ENCODE measurements at regions of chr19 and their contacts with region 1.

Region 1: DNA sequence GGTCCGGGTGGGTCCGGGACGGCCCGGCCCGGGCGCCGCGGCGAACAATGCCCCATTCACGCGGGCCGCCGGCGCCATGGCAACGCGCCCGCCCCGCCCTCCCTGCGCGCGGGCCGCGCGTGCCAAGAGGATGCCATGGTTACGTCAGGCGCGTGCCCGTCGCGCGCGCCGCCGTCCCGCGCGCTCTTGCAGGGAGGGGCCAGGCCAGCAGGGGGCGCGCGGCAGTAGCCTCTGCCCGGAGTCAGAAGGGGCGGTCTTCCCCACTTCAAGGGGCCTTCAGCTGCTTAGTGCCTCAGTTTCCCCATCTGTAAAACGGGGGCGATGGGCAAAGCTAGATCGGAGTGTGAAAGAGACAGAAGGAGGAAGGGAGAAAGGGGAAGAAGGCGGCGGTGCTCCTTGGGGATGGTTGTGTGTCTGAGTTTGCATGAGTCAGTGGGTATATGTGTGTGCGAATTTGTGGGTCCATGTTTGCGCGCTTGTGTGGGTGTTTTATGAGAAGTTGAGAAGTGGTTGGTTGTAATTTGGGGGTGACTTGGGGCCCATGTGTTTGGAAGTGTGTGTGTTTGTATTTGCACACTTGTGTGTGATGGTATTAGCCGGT is 11.6 kb upstream of the NFIX start:
- DNase-seq: peak; percentile 91 to 92
- ATAC-seq: peak; percentile 40 to 73 (median 43)
- H3K4me3 ChIP-seq: peak overlapping the region; percentile 19
- H3K4me3 Mint-ChIP-seq: no peak overlapping the region
- H3K27ac ChIP-seq: no peak overlapping the region
- H3K27ac Mint-ChIP-seq: no peak overlapping the region
- H3K4me1 ChIP-seq: peaks cover 33% of the 10 kb centered on the region
- H3K4me1 Mint-ChIP-seq: peaks cover 0 to 5% of the 10 kb centered on the region in 2 donors
- H3K27me3 ChIP-seq: peaks cover 7% of the 10 kb centered on the region
- H3K27me3 Mint-ChIP-seq: peaks cover 0 to 3% of the 10 kb centered on the region in 2 donors
- CTCF ChIP-seq: peak; percentile 84

Region 2: DNA sequence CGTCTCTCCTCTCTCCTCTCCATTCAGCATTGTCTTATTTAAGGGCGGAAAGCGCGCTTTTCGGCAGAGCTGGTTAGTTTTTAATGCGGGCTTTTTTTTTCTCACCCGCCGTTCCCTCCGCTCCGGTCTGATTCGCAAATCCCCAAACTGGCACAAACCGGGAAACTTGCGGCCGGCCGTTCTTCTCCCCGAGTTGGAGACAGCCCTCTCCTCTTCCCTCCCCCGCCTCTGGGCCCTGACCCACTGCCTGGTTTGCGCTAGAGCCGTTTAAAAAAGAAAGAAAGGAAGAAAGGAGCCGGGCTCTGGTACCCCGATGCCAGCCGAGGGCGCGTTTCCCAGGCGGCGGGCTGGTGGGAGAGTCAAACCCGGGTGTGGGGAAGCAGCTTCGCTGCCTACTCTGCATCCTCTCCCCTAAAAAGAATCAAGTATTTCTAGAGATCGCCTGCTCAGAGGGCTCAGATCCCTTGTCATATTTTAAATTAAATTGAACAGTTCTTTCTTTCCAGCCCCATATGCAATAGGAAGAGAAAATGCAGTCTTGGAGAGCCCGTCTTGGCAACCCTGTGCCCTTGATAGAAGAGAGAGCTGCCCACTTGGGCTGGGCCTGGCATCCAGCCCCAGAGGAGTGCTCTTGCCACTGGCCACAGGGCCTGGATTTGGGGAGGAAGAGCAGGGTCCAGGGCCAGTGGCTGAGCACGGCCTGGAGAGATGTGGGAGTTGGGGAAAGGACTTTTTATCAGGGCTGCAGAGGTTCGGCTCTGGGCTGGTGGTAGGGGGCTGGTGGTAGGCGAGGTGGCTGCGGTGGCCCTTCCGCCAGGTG is 30.7 kb after region 1 on chr19:
- intact Hi-C with region 1: loop called (anchors 2 kb)
- DNase-seq: peak in 1 of 2 donors; percentile 32
- ATAC-seq: no peak
- H3K4me3 ChIP-seq: peak overlapping the region; percentile 4
- H3K4me3 Mint-ChIP-seq: peak overlapping the region; percentile 93
- H3K27ac ChIP-seq: no peak overlapping the region
- H3K27ac Mint-ChIP-seq: peak overlapping the region; percentile 68 to 89
- H3K4me1 ChIP-seq: peaks cover 32% of the 10 kb centered on the region
- H3K4me1 Mint-ChIP-seq: peaks cover 18 to 25% of the 10 kb centered on the region in 2 donors
- H3K27me3 ChIP-seq: peaks cover 62% of the 10 kb centered on the region
- H3K27me3 Mint-ChIP-seq: peaks cover 48 to 73% of the 10 kb centered on the region in 2 donors
- CTCF ChIP-seq: no peak

Region 3: GRCh38 chr19:13044231-13044836 is 60.7 kb after region 1 on chr19:
- intact Hi-C with region 1: loop called (anchors 1 kb)
- DNase-seq: peak; percentile 79 to 83
- ATAC-seq: peak; percentile 83 to 93 (median 92)
- H3K4me3 ChIP-seq: no peak overlapping the region
- H3K4me3 Mint-ChIP-seq: peak overlapping the region; percentile 82
- H3K27ac ChIP-seq: peak overlapping the region; percentile 88
- H3K27ac Mint-ChIP-seq: peak overlapping the region; percentile 76 to 95
- H3K4me1 ChIP-seq: peaks cover 44% of the 10 kb centered on the region
- H3K4me1 Mint-ChIP-seq: peaks cover 33 to 42% of the 10 kb centered on the region in 2 donors
- H3K27me3 ChIP-seq: no peaks in the 10 kb centered on the region
- H3K27me3 Mint-ChIP-seq: peaks cover 0 to 11% of the 10 kb centered on the region in 2 donors
- CTCF ChIP-seq: no peak

Region 4: GRCh38 chr19:13060964-13061927 is 77.6 kb after region 1 on chr19:
- intact Hi-C with region 1: loop called (anchors 1 kb)
- DNase-seq: peak; percentile 79 to 89
- ATAC-seq: peak; percentile 85 to 99 (median 98)
- H3K4me3 ChIP-seq: peak overlapping the region; percentile 27
- H3K4me3 Mint-ChIP-seq: peak overlapping the region; percentile 85
- H3K27ac ChIP-seq: no peak overlapping the region
- H3K27ac Mint-ChIP-seq: peak overlapping the region in 1 of 2 donors; percentile 81
- H3K4me1 ChIP-seq: peaks cover 19% of the 10 kb centered on the region
- H3K4me1 Mint-ChIP-seq: peaks cover 6 to 11% of the 10 kb centered on the region in 2 donors
- H3K27me3 ChIP-seq: peaks cover 7% of the 10 kb centered on the region
- H3K27me3 Mint-ChIP-seq: peaks cover 14 to 25% of the 10 kb centered on the region in 2 donors
- CTCF ChIP-seq: peak; percentile 99

Region 5: DNA sequence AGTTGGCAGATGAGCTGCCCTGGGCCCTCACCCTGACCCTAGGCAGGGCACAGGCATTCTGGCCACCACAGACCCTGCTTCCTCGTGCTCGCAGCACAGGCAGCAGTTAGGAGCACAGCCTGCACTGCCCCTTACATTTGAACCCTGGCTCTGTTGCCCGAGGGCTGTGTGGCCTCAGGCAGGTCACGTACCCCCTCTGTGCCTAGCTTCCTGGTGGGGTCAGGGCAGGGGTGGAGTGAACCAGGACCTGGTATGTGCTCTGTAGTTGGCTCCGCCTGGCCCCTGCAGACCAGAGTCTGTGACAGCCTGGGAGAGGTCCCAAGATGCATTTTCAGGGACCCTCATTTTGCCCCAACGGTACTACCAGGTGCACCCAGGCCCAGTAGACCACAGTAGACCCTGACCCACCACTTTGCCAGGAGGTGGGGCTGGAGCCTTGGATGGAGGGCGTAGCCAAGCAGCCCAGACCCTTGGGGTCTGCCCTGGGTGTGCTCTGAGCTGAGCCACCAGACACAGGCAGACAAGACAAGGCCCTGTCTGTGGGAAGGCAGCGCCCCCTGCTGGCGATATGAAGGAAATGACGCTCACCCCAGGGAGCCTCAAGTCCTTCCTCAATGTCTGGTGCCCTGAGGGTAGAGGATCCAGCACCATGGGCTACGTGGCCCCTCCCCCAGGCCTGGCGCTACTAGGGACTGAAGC is 109.9 kb after region 1 on chr19:
- intact Hi-C with region 1: loop called (anchors 1 kb)
- DNase-seq: peak; percentile 80 to 90
- ATAC-seq: peak; percentile 83 to 91 (median 86)
- H3K4me3 ChIP-seq: no peak overlapping the region
- H3K4me3 Mint-ChIP-seq: no peak overlapping the region
- H3K27ac ChIP-seq: no peak overlapping the region
- H3K27ac Mint-ChIP-seq: no peak overlapping the region
- H3K4me1 ChIP-seq: peaks cover 42% of the 10 kb centered on the region
- H3K4me1 Mint-ChIP-seq: peaks cover 8 to 20% of the 10 kb centered on the region in 2 donors
- H3K27me3 ChIP-seq: peaks cover 30% of the 10 kb centered on the region
- H3K27me3 Mint-ChIP-seq: peaks cover 8 to 25% of the 10 kb centered on the region in 2 donors
- CTCF ChIP-seq: peak; percentile 77

Region 6: GRCh38 chr19:13104360-13104847 is 120.8 kb after region 1 on chr19:
- intact Hi-C with region 1: loop called (anchors 1 kb)
- DNase-seq: peak; percentile 69 to 77
- ATAC-seq: peak; percentile 58 to 62 (median 60)
- H3K4me3 ChIP-seq: peak overlapping the region; percentile 49
- H3K4me3 Mint-ChIP-seq: peak overlapping the region; percentile 93
- H3K27ac ChIP-seq: peak overlapping the region; percentile 84
- H3K27ac Mint-ChIP-seq: peak overlapping the region; percentile 70 to 88
- H3K4me1 ChIP-seq: peaks cover 69% of the 10 kb centered on the region
- H3K4me1 Mint-ChIP-seq: peaks cover 10 to 43% of the 10 kb centered on the region in 2 donors
- H3K27me3 ChIP-seq: no peaks in the 10 kb centered on the region
- H3K27me3 Mint-ChIP-seq: no peaks in the 10 kb centered on the region
- CTCF ChIP-seq: peak; percentile 97

Region 7: GRCh38 chr19:13262450-13262849 is 278.8 kb after region 1 on chr19:
- intact Hi-C with region 1: loop called (anchors 1 kb)
- DNase-seq: peak in 1 of 2 donors; percentile 77
- ATAC-seq: peak; percentile 50 to 72 (median 68)
- H3K4me3 ChIP-seq: no peak overlapping the region
- H3K4me3 Mint-ChIP-seq: no peak overlapping the region
- H3K27ac ChIP-seq: no peak overlapping the region
- H3K27ac Mint-ChIP-seq: no peak overlapping the region
- H3K4me1 ChIP-seq: peaks cover 3% of the 10 kb centered on the region
- H3K4me1 Mint-ChIP-seq: no peaks in the 10 kb centered on the region
- H3K27me3 ChIP-seq: peaks cover 2% of the 10 kb centered on the region
- H3K27me3 Mint-ChIP-seq: peaks cover 8 to 20% of the 10 kb centered on the region in 2 donors
- CTCF ChIP-seq: peak; percentile 73

Measured in natural killer cell (primary cell).